ENCODE measurements at regions of chr6 and their contacts with region 1.

Region 1: DNA sequence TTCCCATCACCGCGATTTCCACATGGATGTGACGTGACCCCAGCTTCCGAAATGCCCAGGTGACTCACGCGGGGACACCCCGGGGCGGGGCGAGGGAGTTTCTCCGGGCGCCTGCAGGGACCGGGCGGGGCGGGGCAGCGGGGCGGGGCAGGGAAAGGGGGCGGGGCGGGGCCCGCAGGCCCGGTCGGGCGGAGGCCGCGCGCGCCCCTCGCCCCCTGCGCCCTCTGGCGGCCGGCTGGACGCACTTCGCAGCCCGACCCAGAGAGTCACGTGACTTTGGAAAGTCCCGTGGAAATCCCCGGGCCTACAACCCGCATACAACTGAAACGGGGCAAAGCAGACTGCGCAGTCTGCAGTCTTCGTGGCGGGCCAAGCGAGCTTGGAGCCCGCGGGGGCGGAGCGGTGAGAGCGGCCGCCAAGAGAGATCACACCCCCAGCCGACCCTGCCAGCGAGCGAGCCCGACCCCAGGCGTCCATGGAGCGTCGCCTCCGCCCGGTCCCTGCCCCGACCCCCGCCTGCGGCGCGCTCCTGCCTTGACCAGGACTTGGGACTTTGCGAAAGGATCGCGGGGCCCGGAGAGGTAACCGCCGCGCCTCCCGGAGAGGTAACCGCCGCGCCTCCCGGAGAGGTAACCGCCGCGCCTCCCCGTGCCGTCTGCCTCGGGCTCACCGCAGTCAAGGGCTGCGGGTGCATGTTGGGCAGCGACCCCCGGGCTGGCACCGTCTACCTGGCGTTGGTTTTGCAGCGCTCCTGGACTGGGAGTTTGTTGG is at the start of gene TNFAIP3:
- DNase-seq: peak; percentile 97
- ATAC-seq: peak; percentile 78
- H3K4me3 Mint-ChIP-seq: peak within 1 kb of the TSS; percentile 96
- H3K27ac Mint-ChIP-seq: peak within 1 kb of the TSS; percentile 98
- H3K4me1 Mint-ChIP-seq: peaks cover 54% of the 10 kb centered on the region
- H3K27me3 Mint-ChIP-seq: no peaks in the 10 kb centered on the region
- CTCF ChIP-seq: no peak
- total RNA-seq, gene TNFAIP3: 207 and 226 TPM in 2 replicates

Region 2: DNA sequence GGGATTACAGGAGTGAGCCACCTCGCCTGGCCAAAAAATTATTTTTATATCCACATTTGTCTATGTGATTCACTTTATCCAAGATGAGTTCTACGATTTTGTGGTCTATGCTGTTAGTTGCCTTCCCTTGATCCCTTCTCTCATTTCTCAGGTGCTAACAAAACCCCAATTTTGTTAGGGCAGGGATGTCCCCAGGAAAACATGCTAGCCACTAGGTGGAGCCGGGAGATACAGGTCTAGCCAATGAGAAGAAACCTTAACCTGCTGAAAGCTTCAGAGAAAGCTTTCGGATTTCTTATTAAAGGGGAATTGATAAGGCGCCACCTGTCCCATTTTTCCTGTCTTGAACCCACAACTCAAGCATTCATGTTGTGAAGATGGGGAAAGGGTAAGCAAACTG is 205.5 kb before region 1 on chr6:
- CTCF ChIA-PET with region 1: no interaction called
- POLR2A ChIA-PET with region 1: interaction called, 3 read pairs
- intact Hi-C with region 1: loop called (anchors 5 kb)
- DNase-seq: no peak
- ATAC-seq: peak; percentile 56
- H3K4me3 Mint-ChIP-seq: no peak overlapping the region
- H3K27ac Mint-ChIP-seq: no peak overlapping the region
- H3K4me1 Mint-ChIP-seq: no peaks in the 10 kb centered on the region
- H3K27me3 Mint-ChIP-seq: peaks cover 7% of the 10 kb centered on the region
- CTCF ChIP-seq: no peak

Region 3: DNA sequence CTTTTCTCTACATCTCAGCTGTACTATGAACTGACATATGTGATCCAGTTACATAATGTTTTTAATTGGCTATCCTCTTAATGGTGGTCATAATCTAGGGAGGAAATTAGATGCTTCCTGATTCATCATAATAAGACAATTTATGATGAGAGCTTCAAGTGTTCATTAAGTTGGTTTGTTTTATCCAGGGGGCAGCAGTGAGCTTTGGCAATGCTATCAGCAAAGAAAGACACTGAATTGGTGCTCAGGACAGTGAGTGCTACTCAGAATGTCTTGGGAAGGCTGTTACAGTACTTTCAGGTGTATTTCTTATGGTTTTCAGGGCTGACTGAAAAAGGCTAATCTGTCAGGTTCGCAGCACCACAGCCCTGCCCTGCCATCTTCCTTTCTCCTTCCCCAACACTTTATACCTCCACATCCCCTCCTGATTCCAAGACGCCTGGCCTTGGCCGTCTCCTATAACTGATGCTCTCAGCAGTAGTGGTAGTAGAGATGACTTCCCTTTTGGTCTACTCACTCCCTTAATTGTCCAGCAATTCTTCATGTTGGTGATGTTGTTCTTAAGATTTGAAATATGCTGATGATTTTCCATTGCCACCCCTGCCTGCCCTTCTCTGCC is 67.0 kb before region 1 on chr6:
- CTCF ChIA-PET with region 1: interaction called, 107 read pairs
- POLR2A ChIA-PET with region 1: interaction called, 59 read pairs
- intact Hi-C with region 1: loop called (anchors 1 kb)
- DNase-seq: no peak
- ATAC-seq: peak; percentile 91
- H3K4me3 Mint-ChIP-seq: no peak overlapping the region
- H3K27ac Mint-ChIP-seq: peak overlapping the region; percentile 65
- H3K4me1 Mint-ChIP-seq: peaks cover 29% of the 10 kb centered on the region
- H3K27me3 Mint-ChIP-seq: no peaks in the 10 kb centered on the region
- CTCF ChIP-seq: no peak

Region 4: GRCh38 chr6:137846772-137847313 is 20.3 kb before region 1 on chr6:
- CTCF ChIA-PET with region 1: no interaction called
- POLR2A ChIA-PET with region 1: interaction called, 8 read pairs
- intact Hi-C with region 1: loop called (anchors 1 kb)
- DNase-seq: peak; percentile 27
- ATAC-seq: peak; percentile 90
- H3K4me3 Mint-ChIP-seq: no peak overlapping the region
- H3K27ac Mint-ChIP-seq: no peak overlapping the region
- H3K4me1 Mint-ChIP-seq: peaks cover 10% of the 10 kb centered on the region
- H3K27me3 Mint-ChIP-seq: no peaks in the 10 kb centered on the region
- CTCF ChIP-seq: no peak

Region 5: GRCh38 chr6:137927777-137928218 is 60.7 kb after region 1 on chr6:
- CTCF ChIA-PET with region 1: interaction called, 16 read pairs
- POLR2A ChIA-PET with region 1: interaction called, 36 read pairs
- intact Hi-C with region 1: loop called (anchors 1 kb)
- DNase-seq: peak; percentile 51
- ATAC-seq: peak; percentile 95
- H3K4me3 Mint-ChIP-seq: peak overlapping the region; percentile 48
- H3K27ac Mint-ChIP-seq: peak overlapping the region; percentile 85
- H3K4me1 Mint-ChIP-seq: peaks cover 57% of the 10 kb centered on the region
- H3K27me3 Mint-ChIP-seq: no peaks in the 10 kb centered on the region
- CTCF ChIP-seq: no peak

Region 6: DNA sequence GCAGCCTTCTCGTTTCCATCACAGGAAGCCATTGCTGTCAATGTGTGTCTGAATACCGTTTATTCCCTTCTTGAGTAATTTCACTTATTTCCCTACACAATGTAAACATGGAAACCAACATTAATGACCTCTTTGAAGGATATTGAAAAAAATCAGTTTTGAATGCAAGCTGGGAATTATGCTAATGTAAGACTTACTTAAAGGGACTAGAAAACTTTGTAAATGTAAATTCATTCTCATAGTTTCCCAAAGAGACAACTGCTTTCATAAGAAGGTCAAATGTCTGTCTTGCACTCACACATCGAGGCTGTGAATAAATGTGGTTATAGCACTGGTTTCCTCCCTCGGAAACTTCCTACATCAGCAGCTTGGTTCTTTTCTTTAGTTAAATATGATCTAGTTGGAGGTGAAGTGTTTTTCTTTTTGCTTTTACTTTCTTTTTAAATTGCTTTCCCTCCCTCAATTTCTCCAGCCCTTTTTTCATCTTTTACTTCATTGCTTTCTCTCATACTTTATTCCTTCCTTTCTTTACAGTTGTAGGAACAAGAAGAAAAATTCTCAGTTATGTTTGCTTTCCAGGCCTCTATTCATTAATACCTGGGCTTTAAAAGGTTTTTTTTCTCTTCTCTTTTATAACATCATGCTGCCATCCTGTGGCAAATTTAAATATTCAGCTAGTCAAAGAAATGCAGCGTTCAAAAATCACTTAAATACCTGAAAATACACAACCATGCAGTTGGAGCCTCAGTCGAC is 108.3 kb after region 1 on chr6:
- CTCF ChIA-PET with region 1: interaction called, 22 read pairs
- POLR2A ChIA-PET with region 1: interaction called, 11 read pairs
- intact Hi-C with region 1: loop called (anchors 1 kb)
- DNase-seq: no peak
- ATAC-seq: peak; percentile 40
- H3K4me3 Mint-ChIP-seq: peak overlapping the region; percentile 8
- H3K27ac Mint-ChIP-seq: peak overlapping the region; percentile 65
- H3K4me1 Mint-ChIP-seq: peaks cover 17% of the 10 kb centered on the region
- H3K27me3 Mint-ChIP-seq: no peaks in the 10 kb centered on the region
- CTCF ChIP-seq: no peak

Region 7: DNA sequence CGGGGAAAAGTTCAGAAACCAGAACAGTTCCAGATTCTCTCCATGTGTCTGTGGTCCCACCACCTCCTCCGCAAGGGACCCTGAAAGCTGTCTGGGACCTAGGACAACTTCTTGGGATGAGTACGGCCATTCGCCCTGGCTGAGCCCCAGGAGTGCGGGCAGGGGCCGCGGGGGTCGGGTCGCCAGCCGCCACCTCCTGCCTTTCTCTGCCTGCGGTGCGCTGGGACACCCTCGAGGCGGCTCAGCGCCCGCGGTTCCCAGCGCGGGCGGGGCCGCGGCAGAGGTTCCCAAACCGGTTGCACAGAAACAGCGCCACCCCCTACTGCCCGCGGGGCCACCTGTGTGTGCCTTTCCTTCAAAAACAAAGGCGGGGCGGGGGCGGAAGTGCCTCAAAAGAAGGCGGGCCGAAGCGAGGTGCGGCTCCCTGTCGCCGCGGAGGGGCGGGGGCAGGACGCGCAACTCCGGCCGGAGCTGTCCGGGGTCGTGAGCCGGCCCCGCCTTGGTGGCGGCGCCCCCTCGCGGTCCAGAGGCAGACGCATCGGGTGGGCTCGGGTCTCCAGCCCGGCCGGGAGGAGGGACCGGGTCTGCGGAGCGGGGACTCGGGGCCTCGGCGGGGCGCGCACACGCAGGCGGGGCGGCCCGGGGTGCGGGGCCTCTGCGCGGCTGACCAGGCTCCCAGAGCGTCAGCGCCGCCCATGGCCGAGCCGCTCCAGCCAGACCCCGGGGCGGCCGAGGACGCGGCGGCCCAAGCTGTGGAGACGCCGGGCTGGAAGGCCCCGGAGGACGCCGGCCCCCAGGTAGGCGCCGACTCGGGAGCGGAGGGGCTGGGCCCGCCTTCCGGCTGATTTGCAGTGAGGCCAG is 536.9 kb after region 1 on chr6 and contains the start of gene HEBP2:
- CTCF ChIA-PET with region 1: no interaction called
- POLR2A ChIA-PET with region 1: interaction called, 3 read pairs
- intact Hi-C with region 1: loop called (anchors 5 kb)
- DNase-seq: peak; percentile 88
- ATAC-seq: peak; percentile 87
- H3K4me3 Mint-ChIP-seq: peak within 1 kb of the TSS; percentile 90
- H3K27ac Mint-ChIP-seq: peak within 1 kb of the TSS; percentile 89
- H3K4me1 Mint-ChIP-seq: peaks cover 20% of the 10 kb centered on the region
- H3K27me3 Mint-ChIP-seq: no peaks in the 10 kb centered on the region
- CTCF ChIP-seq: no peak
- total RNA-seq, gene HEBP2: 26.2 and 32.7 TPM in 2 replicates

Measured in activated B cell treated with CpG ODN at 0.5 μM for 24 hours (primary cell).